HEK293 (cell line): ENCODE measurements at regions of chr17 and their contacts with region 1.

Region 1: GRCh38 chr17:77140166-77140878 is 447 bp upstream of the SEC14L1 start:
- H3K4me3 ChIP-seq: peak overlapping the region; percentile 97
- H3K27ac ChIP-seq: peak overlapping the region; percentile 95
- H3K4me1 ChIP-seq: peaks cover 3% of the 10 kb centered on the region
- CTCF ChIP-seq: peak; percentile 24; the same call in 1 of the 2 replicates

Region 2: GRCh38 chr17:77127735-77128361 is 12.5 kb before region 1 on chr17:
- CTCF ChIA-PET with region 1: interaction called, 7 read pairs
- POLR2A ChIA-PET with region 1: interaction called, 29 read pairs
- H3K4me3 ChIP-seq: no peak overlapping the region
- H3K27ac ChIP-seq: no peak overlapping the region
- H3K4me1 ChIP-seq: no peaks in the 10 kb centered on the region; the same call in 1 of the 2 replicates
- CTCF ChIP-seq: no peak

Region 3: GRCh38 chr17:77200711-77201110 is 60.4 kb after region 1 on chr17:
- CTCF ChIA-PET with region 1: interaction called, 10 read pairs
- POLR2A ChIA-PET with region 1: no interaction called
- H3K4me3 ChIP-seq: no peak overlapping the region
- H3K27ac ChIP-seq: no peak overlapping the region
- H3K4me1 ChIP-seq: no peaks in the 10 kb centered on the region
- CTCF ChIP-seq: no peak